CD8-positive, alpha-beta T cell (primary cell): ENCODE measurements at regions of chr6 and their contacts with region 1.

Region 1: GRCh38 chr6:26156076-26156849 is 69.0 kb downstream of the HFE start:
- DNase-seq: peak; percentile 77 to 96 (median 84)
- ATAC-seq: peak; percentile 39
- H3K4me3 ChIP-seq: peak overlapping the region; percentile 51 to 86
- H3K4me3 Mint-ChIP-seq: peak overlapping the region; percentile 94
- H3K27ac ChIP-seq: peak overlapping the region; percentile 85 to 98
- H3K27ac Mint-ChIP-seq: peak overlapping the region; percentile 98
- H3K4me1 ChIP-seq: peaks cover 20% of the 10 kb centered on the region
- H3K4me1 Mint-ChIP-seq: peaks cover 34% of the 10 kb centered on the region
- H3K27me3 ChIP-seq: no peaks in the 10 kb centered on the region
- H3K27me3 Mint-ChIP-seq: no peaks in the 10 kb centered on the region
- CTCF ChIP-seq: no peak

Region 2: DNA sequence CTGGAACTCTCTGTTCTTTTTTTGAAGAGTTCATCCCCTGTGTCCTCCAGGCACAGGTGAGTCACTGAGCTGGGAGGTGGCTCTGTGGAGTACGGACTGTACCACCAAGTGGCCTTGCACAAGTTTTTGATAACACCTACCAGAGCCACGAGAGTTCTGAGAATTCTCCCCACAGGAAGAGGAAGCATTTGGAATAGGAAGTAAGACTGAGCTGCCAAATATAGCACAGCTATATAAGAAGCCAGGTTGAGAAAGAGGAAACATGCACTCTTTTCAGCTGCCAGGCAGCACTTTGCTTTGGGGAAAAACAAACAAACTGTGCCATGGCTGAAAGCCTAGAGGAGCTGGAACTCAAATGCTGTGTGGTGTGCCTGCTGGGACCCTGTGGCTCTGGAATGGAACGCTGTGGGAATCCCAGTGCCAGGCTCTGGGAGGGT is 1149.7 kb before region 1 on chr6:
- CTCF ChIA-PET with region 1: no interaction called
- POLR2A ChIA-PET with region 1: no interaction called
- intact Hi-C with region 1: no loop called
- DNase-seq: peak in 5 of 9 experiments; percentile 29 to 66 (median 43)
- ATAC-seq: peak; percentile 63
- H3K4me3 ChIP-seq: peak overlapping the region in 1 of 2 experiments; percentile 3
- H3K4me3 Mint-ChIP-seq: peak overlapping the region; percentile 20
- H3K27ac ChIP-seq: peak overlapping the region; percentile 29 to 85
- H3K27ac Mint-ChIP-seq: peak overlapping the region; percentile 84
- H3K4me1 ChIP-seq: peaks cover 64% of the 10 kb centered on the region
- H3K4me1 Mint-ChIP-seq: peaks cover 78% of the 10 kb centered on the region
- H3K27me3 ChIP-seq: no peaks in the 10 kb centered on the region
- H3K27me3 Mint-ChIP-seq: no peaks in the 10 kb centered on the region
- CTCF ChIP-seq: no peak

Region 3: DNA sequence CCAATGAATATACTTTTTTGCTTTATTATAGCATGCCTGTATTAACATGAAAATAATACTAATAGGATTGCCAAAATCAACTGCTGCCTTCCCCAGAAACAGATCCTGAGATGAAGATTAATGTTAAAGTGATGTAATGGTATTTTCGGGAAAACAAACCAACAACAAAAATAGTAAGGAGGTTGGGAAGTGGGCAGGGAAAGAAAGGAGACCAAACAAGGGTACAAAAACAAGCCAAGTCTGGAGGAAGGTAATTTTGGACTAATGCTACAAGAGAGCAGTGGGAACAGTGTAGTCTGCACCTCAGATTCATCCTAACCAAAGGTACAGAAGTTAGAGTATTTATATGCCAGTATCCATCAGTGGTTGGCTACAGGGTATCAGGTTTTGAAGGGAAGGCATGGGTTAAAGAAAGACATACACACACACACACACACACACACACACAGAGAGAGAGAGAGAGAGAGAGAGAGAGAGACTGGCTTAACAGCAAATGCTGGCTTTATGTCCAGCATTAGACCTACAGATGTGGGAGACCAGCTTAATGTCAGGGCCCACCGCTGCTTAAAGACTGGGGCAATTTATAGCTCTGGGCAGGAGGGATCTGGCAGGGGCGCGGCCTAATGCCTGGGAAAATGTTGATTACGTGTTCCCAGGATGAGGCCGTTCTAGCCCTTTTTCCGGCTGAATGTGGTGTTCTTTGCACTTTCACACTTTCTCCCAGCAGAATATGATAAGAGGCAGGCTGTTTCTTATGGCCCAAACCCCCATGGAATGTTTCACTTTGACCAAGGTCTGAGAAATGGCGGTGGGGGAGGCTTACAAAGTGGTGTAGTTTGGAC is 320.6 kb before region 1 on chr6:
- CTCF ChIA-PET with region 1: no interaction called
- POLR2A ChIA-PET with region 1: no interaction called
- intact Hi-C with region 1: no loop called
- DNase-seq: no peak
- ATAC-seq: no peak
- H3K4me3 ChIP-seq: no peak overlapping the region
- H3K4me3 Mint-ChIP-seq: no peak overlapping the region
- H3K27ac ChIP-seq: no peak overlapping the region
- H3K27ac Mint-ChIP-seq: no peak overlapping the region
- H3K4me1 ChIP-seq: no peaks in the 10 kb centered on the region
- H3K4me1 Mint-ChIP-seq: no peaks in the 10 kb centered on the region
- H3K27me3 ChIP-seq: no peaks in the 10 kb centered on the region
- H3K27me3 Mint-ChIP-seq: peaks cover 10% of the 10 kb centered on the region
- CTCF ChIP-seq: no peak

Region 4: DNA sequence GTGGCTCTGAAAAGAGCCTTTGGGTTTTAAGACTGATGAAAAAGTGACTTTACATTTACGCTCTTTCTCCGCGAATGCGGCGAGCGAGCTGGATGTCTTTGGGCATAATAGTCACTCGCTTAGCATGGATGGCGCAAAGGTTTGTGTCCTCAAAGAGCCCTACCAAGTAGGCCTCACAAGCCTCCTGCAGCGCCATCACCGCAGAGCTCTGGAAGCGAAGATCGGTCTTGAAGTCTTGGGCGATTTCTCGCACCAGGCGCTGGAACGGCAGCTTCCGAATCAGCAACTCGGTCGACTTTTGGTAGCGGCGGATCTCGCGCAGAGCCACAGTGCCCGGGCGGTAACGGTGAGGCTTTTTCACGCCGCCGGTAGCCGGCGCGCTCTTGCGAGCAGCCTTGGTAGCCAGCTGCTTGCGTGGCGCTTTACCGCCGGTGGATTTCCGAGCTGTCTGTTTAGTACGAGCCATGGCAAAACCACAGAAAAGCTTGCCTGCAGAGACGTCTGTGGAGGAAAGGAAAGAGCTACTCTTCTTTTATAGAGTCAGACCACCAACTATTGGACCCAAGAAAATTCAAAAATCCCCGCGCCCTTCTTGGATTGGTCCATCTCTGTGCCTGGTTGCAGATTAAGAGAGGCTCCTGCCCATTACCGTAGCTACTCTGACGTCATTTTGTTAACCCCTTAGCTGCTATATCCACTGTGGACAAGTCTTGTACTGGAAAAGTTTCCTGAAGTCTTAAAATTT is 124.5 kb before region 1 on chr6:
- CTCF ChIA-PET with region 1: interaction called, 5 read pairs
- POLR2A ChIA-PET with region 1: interaction called, 186 read pairs
- intact Hi-C with region 1: loop called (anchors 2 to 5 kb)
- DNase-seq: peak; percentile 79 to 93 (median 88)
- ATAC-seq: peak; percentile 63
- H3K4me3 ChIP-seq: peak overlapping the region; percentile 68 to 71
- H3K4me3 Mint-ChIP-seq: peak overlapping the region; percentile 93
- H3K27ac ChIP-seq: peak overlapping the region; percentile 76 to 79
- H3K27ac Mint-ChIP-seq: peak overlapping the region; percentile 96
- H3K4me1 ChIP-seq: peaks cover 31% of the 10 kb centered on the region
- H3K4me1 Mint-ChIP-seq: peaks cover 46% of the 10 kb centered on the region
- H3K27me3 ChIP-seq: no peaks in the 10 kb centered on the region
- H3K27me3 Mint-ChIP-seq: no peaks in the 10 kb centered on the region
- CTCF ChIP-seq: no peak

Region 5: DNA sequence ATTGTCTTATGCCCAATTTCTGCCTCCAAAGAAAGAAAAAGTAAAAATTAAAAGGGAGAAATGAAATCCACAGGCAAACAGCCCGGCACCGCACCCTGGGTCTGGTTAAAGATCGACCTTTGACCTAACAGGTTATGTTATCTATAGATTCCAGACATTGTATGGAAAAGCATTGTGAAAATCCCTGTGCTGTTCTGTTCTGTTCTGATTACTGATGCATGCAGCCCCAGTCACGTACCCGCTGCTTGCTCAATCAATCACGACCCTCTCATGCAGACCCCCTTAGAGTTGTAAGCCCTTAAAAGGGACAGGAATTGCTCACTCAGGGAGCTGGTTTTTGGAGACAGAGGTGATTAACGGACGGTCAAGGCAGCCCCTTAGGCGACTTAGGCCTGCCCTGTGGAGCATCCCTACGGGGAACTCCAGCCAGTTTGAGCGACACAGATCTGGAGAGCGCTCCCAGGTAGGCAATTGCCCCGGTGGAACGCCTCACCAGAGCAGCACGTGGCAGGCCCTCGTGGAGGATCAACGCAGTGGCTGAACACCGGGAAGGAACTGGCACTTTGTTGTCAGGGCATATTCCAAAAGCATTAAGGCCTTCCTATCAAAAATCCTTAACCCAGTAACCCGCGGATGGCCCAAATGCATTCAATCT is 81.1 kb before region 1 on chr6:
- CTCF ChIA-PET with region 1: no interaction called
- POLR2A ChIA-PET with region 1: no interaction called
- intact Hi-C with region 1: no loop called
- DNase-seq: no peak
- ATAC-seq: no peak
- H3K4me3 ChIP-seq: no peak overlapping the region
- H3K4me3 Mint-ChIP-seq: no peak overlapping the region
- H3K27ac ChIP-seq: no peak overlapping the region
- H3K27ac Mint-ChIP-seq: no peak overlapping the region
- H3K4me1 ChIP-seq: no peaks in the 10 kb centered on the region
- H3K4me1 Mint-ChIP-seq: no peaks in the 10 kb centered on the region
- H3K27me3 ChIP-seq: no peaks in the 10 kb centered on the region
- H3K27me3 Mint-ChIP-seq: peaks cover 2% of the 10 kb centered on the region
- CTCF ChIP-seq: no peak

Region 6: GRCh38 chr6:26122793-26123674 is 33.2 kb before region 1 on chr6:
- CTCF ChIA-PET with region 1: interaction called, 62 read pairs
- POLR2A ChIA-PET with region 1: interaction called, 1,910 read pairs
- intact Hi-C with region 1: loop called (anchors 1 kb)
- DNase-seq: peak; percentile 73 to 99 (median 91)
- ATAC-seq: peak; percentile 54
- H3K4me3 ChIP-seq: peak overlapping the region; percentile 78 to 98
- H3K4me3 Mint-ChIP-seq: peak overlapping the region; percentile 94
- H3K27ac ChIP-seq: peak overlapping the region; percentile 87 to 94
- H3K27ac Mint-ChIP-seq: peak overlapping the region; percentile 99
- H3K4me1 ChIP-seq: peaks cover 20% of the 10 kb centered on the region
- H3K4me1 Mint-ChIP-seq: peaks cover 27% of the 10 kb centered on the region
- H3K27me3 ChIP-seq: no peaks in the 10 kb centered on the region
- H3K27me3 Mint-ChIP-seq: no peaks in the 10 kb centered on the region
- CTCF ChIP-seq: no peak

Region 7: GRCh38 chr6:26183581-26184366 is 27.5 kb after region 1 on chr6:
- CTCF ChIA-PET with region 1: interaction called, 8 read pairs
- POLR2A ChIA-PET with region 1: interaction called, 1,041 read pairs
- intact Hi-C with region 1: loop called in 1 of 2 experiments (anchors 1 kb)
- DNase-seq: peak in 7 of 9 experiments; percentile 33 to 90 (median 59)
- ATAC-seq: peak; percentile 88
- H3K4me3 ChIP-seq: peak overlapping the region; percentile 60 to 71
- H3K4me3 Mint-ChIP-seq: peak overlapping the region; percentile 100
- H3K27ac ChIP-seq: peak overlapping the region; percentile 61 to 76
- H3K27ac Mint-ChIP-seq: peak overlapping the region; percentile 99
- H3K4me1 ChIP-seq: peaks cover 20% of the 10 kb centered on the region
- H3K4me1 Mint-ChIP-seq: peaks cover 42% of the 10 kb centered on the region
- H3K27me3 ChIP-seq: no peaks in the 10 kb centered on the region
- H3K27me3 Mint-ChIP-seq: no peaks in the 10 kb centered on the region
- CTCF ChIP-seq: no peak

Region 8: DNA sequence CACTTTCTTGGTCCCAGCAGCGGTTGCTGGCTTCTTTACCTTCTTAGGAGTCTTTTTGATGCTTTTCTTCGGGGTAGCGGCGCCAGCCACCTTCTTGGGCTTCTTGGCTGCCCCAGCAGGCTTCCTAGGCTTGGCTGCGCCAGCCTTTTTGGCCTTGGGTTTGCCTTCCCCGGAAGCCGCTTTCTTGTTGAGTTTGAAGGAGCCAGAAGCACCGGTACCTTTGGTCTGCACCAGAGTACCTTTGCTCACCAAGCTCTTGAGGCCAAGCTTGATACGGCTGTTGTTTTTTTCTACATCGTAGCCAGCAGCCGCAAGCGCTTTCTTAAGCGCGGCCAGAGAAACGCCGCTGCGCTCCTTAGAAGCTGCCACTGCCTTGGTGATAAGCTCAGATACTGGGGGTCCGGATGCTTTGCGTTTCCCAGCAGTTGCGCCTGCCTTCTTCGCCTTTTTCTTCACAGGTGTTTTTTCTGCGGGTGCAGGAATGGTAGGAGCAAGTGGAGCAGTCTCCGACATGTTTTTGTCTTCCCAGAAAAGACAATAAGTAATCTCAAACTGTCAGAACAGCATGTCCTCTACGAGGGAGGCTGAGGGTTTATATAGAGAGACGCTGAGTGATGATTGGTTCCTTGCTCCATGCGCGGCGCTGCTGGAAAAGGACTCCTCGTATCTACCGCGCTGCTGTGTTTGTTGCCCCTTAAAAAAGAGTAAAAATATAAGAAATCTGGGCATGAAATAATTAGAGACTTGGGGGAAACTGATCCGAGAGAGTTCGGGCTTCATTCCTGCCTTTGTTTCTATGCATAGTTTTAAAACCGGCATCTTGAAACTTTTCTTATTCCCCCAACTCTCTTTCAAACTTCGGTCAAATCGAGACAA is 78.4 kb after region 1 on chr6:
- CTCF ChIA-PET with region 1: no interaction called
- POLR2A ChIA-PET with region 1: interaction called, 201 read pairs
- intact Hi-C with region 1: no loop called
- DNase-seq: peak; percentile 55 to 88 (median 66)
- ATAC-seq: peak; percentile 63
- H3K4me3 ChIP-seq: peak overlapping the region; percentile 66 to 76
- H3K4me3 Mint-ChIP-seq: peak overlapping the region; percentile 85
- H3K27ac ChIP-seq: peak overlapping the region; percentile 84 to 92
- H3K27ac Mint-ChIP-seq: peak overlapping the region; percentile 93
- H3K4me1 ChIP-seq: peaks cover 14% of the 10 kb centered on the region
- H3K4me1 Mint-ChIP-seq: peaks cover 31% of the 10 kb centered on the region
- H3K27me3 ChIP-seq: no peaks in the 10 kb centered on the region
- H3K27me3 Mint-ChIP-seq: no peaks in the 10 kb centered on the region
- CTCF ChIP-seq: no peak

Region 9: GRCh38 chr6:26292709-26293108 is 136.4 kb after region 1 on chr6:
- CTCF ChIA-PET with region 1: no interaction called
- POLR2A ChIA-PET with region 1: no interaction called
- intact Hi-C with region 1: no loop called
- DNase-seq: no peak
- ATAC-seq: no peak
- H3K4me3 ChIP-seq: no peak overlapping the region
- H3K4me3 Mint-ChIP-seq: no peak overlapping the region
- H3K27ac ChIP-seq: no peak overlapping the region
- H3K27ac Mint-ChIP-seq: no peak overlapping the region
- H3K4me1 ChIP-seq: no peaks in the 10 kb centered on the region
- H3K4me1 Mint-ChIP-seq: no peaks in the 10 kb centered on the region
- H3K27me3 ChIP-seq: no peaks in the 10 kb centered on the region
- H3K27me3 Mint-ChIP-seq: no peaks in the 10 kb centered on the region
- CTCF ChIP-seq: no peak

Region 10: GRCh38 chr6:27132532-27133280 is 976.4 kb after region 1 on chr6:
- CTCF ChIA-PET with region 1: no interaction called
- POLR2A ChIA-PET with region 1: interaction called, 74 read pairs
- intact Hi-C with region 1: loop called in 1 of 2 experiments (anchors 2 kb)
- DNase-seq: peak; percentile 80 to 99 (median 87)
- ATAC-seq: peak; percentile 82
- H3K4me3 ChIP-seq: peak overlapping the region; percentile 76 to 83
- H3K4me3 Mint-ChIP-seq: no peak overlapping the region
- H3K27ac ChIP-seq: peak overlapping the region; percentile 86 to 92
- H3K27ac Mint-ChIP-seq: no peak overlapping the region
- H3K4me1 ChIP-seq: peaks cover 15% of the 10 kb centered on the region
- H3K4me1 Mint-ChIP-seq: peaks cover 21% of the 10 kb centered on the region
- H3K27me3 ChIP-seq: no peaks in the 10 kb centered on the region
- H3K27me3 Mint-ChIP-seq: no peaks in the 10 kb centered on the region
- CTCF ChIP-seq: no peak

Region 11: GRCh38 chr6:27838058-27838944 is 1682.0 kb after region 1 on chr6:
- CTCF ChIA-PET with region 1: no interaction called
- POLR2A ChIA-PET with region 1: interaction called, 93 read pairs
- intact Hi-C with region 1: no loop called
- DNase-seq: peak; percentile 61 to 98 (median 74)
- ATAC-seq: peak; percentile 70
- H3K4me3 ChIP-seq: peak overlapping the region; percentile 64 to 76
- H3K4me3 Mint-ChIP-seq: no peak overlapping the region
- H3K27ac ChIP-seq: peak overlapping the region; percentile 91 to 98
- H3K27ac Mint-ChIP-seq: no peak overlapping the region
- H3K4me1 ChIP-seq: peaks cover 35% of the 10 kb centered on the region
- H3K4me1 Mint-ChIP-seq: peaks cover 21% of the 10 kb centered on the region
- H3K27me3 ChIP-seq: peaks cover 0 to 4% of the 10 kb centered on the region in 2 experiments
- H3K27me3 Mint-ChIP-seq: peaks cover 7% of the 10 kb centered on the region
- CTCF ChIP-seq: no peak